B cell (primary cell): ENCODE measurements at regions of chr1 and their contacts with region 1.

Region 1: GRCh38 chr1:228486596-228487335 is 416 bp upstream of the RNF187 start:
- DNase-seq: peak; percentile 97
- ATAC-seq: peak; percentile 70
- H3K4me3 ChIP-seq: peak overlapping the region; percentile 74 to 98 (median 93)
- H3K4me3 Mint-ChIP-seq: peak overlapping the region; percentile 97
- H3K27ac ChIP-seq: peak overlapping the region; percentile 100
- H3K27ac Mint-ChIP-seq: peak overlapping the region; percentile 100
- H3K4me1 ChIP-seq: peaks cover 14 to 25% of the 10 kb centered on the region in 2 donors
- H3K4me1 Mint-ChIP-seq: peaks cover 36% of the 10 kb centered on the region
- H3K27me3 ChIP-seq: no peaks in the 10 kb centered on the region
- H3K27me3 Mint-ChIP-seq: no peaks in the 10 kb centered on the region
- CTCF ChIP-seq: no peak

Region 2: DNA sequence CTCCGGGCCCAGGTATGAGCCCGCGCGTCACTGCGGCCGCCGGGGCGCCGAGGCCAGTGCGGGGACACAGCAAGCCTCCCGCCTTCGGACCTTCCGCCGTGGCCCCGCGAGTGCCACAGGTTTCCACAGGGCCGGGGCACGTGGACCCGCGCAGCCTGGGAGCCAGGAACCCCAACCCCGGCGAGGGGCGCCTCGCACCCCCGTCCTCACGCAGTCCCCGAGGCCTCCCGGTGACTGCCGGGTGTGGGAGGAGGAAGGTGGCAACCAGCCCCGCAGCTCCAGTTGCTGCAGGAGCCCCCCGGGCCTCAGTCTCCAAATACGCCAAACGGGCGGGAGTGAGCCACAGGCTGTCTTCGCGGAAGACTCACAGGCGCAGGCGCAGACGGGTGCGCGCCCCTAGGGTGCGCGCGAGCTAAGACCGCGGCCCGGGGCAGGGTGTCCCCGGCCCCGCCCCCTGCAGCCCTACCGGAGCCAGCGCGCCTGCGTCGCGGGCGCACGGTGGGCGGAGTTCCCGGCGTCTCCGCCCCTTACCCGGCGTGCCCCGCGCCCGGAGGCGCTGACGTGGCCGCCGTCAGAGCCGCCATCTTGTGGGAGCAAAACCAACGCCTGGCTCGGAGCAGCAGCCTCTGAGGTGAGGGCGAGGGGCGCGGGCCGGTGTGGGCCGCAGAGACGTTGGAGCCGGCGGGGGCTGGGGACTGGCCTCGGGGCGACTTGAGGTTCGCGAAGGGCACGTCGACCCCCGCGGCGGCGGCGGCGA is 404.5 kb before region 1 on chr1 and contains the start of gene ARF1:
- CTCF ChIA-PET with region 1: no interaction called
- POLR2A ChIA-PET with region 1: interaction called, 4 read pairs
- intact Hi-C with region 1: loop called (anchors 1 kb)
- DNase-seq: peak; percentile 96
- ATAC-seq: peak; percentile 92
- H3K4me3 ChIP-seq: peak within 1 kb of the TSS; percentile 78 to 97 (median 91)
- H3K4me3 Mint-ChIP-seq: peak within 1 kb of the TSS; percentile 94
- H3K27ac ChIP-seq: peak within 1 kb of the TSS; percentile 78 to 96
- H3K27ac Mint-ChIP-seq: peak within 1 kb of the TSS; percentile 93
- H3K4me1 ChIP-seq: peaks cover 44 to 50% of the 10 kb centered on the region in 2 donors
- H3K4me1 Mint-ChIP-seq: peaks cover 46% of the 10 kb centered on the region
- H3K27me3 ChIP-seq: no peaks in the 10 kb centered on the region
- H3K27me3 Mint-ChIP-seq: no peaks in the 10 kb centered on the region
- CTCF ChIP-seq: no peak
- total RNA-seq, gene ARF1: 193 and 195 TPM in 2 replicates

Region 3: GRCh38 chr1:228165372-228166169 is 321.2 kb before region 1 on chr1 and contains the start of gene IBA57:
- CTCF ChIA-PET with region 1: interaction called, 3 read pairs
- POLR2A ChIA-PET with region 1: interaction called, 4 read pairs
- intact Hi-C with region 1: loop called (anchors 1 kb)
- DNase-seq: peak; percentile 100
- ATAC-seq: peak; percentile 84
- H3K4me3 ChIP-seq: peak within 1 kb of the TSS; percentile 64 to 88 (median 74)
- H3K4me3 Mint-ChIP-seq: peak within 1 kb of the TSS; percentile 93
- H3K27ac ChIP-seq: peak within 1 kb of the TSS; percentile 95 to 98
- H3K27ac Mint-ChIP-seq: peak within 1 kb of the TSS; percentile 99
- H3K4me1 ChIP-seq: peaks cover 14 to 26% of the 10 kb centered on the region in 2 donors
- H3K4me1 Mint-ChIP-seq: peaks cover 28% of the 10 kb centered on the region
- H3K27me3 ChIP-seq: peaks cover 0 to 5% (median 0%) of the 10 kb centered on the region in 4 experiments
- H3K27me3 Mint-ChIP-seq: no peaks in the 10 kb centered on the region
- CTCF ChIP-seq: peak; percentile 73
- total RNA-seq, gene IBA57: 12.8 and 15.3 TPM in 2 replicates

Region 4: DNA sequence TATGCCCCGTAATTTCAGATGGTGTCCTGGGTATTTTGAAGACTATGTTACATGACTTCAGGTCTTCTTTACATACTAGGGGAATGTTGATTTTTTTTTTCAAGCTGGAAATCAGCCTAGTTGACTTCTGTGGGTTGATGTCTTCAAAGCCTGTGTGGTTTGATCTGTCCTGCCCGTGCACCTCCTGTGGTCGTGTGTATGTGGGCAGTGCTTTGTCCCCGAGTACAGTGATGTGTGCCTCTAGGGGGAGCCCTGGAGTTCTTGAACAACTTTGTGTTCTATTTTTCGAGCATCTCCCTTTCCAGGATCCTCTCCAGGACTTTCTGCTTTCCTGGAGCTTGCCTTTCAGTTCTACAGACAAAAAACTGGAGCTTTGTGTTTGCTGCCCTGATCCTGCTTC is 250.0 kb before region 1 on chr1:
- CTCF ChIA-PET with region 1: no interaction called
- POLR2A ChIA-PET with region 1: no interaction called
- intact Hi-C with region 1: no loop called
- DNase-seq: no peak
- ATAC-seq: no peak
- H3K4me3 ChIP-seq: no peak overlapping the region
- H3K4me3 Mint-ChIP-seq: no peak overlapping the region
- H3K27ac ChIP-seq: no peak overlapping the region
- H3K27ac Mint-ChIP-seq: no peak overlapping the region
- H3K4me1 ChIP-seq: no peaks in the 10 kb centered on the region
- H3K4me1 Mint-ChIP-seq: no peaks in the 10 kb centered on the region
- H3K27me3 ChIP-seq: no peaks in the 10 kb centered on the region
- H3K27me3 Mint-ChIP-seq: no peaks in the 10 kb centered on the region
- CTCF ChIP-seq: peak; percentile 23

Region 5: DNA sequence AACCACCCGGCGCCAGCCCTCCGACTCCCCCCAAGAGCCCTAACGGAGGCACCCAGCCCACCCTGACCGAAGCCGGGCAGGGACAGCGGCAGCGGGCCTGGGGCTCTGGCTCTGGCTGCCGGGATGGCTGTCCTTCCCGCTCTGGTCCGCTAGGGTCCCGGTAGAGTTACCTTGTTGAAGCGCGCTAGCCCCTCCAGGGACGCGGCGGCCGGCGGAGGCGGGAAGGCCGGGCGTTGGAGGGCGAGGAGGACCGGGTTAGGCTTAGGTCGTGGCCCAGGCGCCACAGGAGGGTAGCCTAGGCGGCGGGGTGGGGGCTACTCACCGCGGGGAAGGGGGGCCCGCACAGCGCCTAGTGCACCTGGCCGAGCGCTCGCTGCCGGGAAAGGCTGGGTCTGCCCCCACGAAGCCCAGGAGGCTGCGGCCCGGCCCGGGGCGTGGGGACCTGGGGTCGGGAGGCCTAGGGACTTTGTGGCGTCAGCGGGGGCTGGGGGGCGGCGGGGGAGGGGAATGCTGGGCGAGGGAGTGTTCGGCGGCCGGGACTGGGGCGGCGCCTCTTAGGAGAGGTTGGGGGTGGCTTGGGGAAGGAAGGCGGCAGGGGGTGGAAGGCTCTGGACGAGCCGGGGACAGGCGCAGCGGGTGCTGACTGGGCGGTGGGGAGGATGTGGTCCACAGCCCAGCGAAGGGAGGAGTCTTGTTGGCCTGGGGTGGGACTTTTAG is 70.4 kb before region 1 on chr1 and contains the start of gene TRIM17:
- CTCF ChIA-PET with region 1: no interaction called
- POLR2A ChIA-PET with region 1: no interaction called
- intact Hi-C with region 1: no loop called
- DNase-seq: peak; percentile 50
- ATAC-seq: peak; percentile 63
- H3K4me3 ChIP-seq: peak within 1 kb of the TSS in 3 of 5 experiments; percentile 1 to 36 (median 28)
- H3K4me3 Mint-ChIP-seq: peak within 1 kb of the TSS; percentile 78
- H3K27ac ChIP-seq: no peak within 1 kb of the TSS
- H3K27ac Mint-ChIP-seq: no peak within 1 kb of the TSS
- H3K4me1 ChIP-seq: peaks cover 17 to 20% of the 10 kb centered on the region in 2 donors
- H3K4me1 Mint-ChIP-seq: peaks cover 16% of the 10 kb centered on the region
- H3K27me3 ChIP-seq: peaks cover 0 to 42% (median 25%) of the 10 kb centered on the region in 4 experiments
- H3K27me3 Mint-ChIP-seq: peaks cover 50% of the 10 kb centered on the region
- CTCF ChIP-seq: peak; percentile 41
- total RNA-seq, gene TRIM17: 0.17 TPM in 1 of 2 replicates, not detected in the other

Region 6: GRCh38 chr1:228457396-228458176 is 29.2 kb before region 1 on chr1:
- CTCF ChIA-PET with region 1: interaction called, 8 read pairs
- POLR2A ChIA-PET with region 1: interaction called, 14 read pairs
- intact Hi-C with region 1: loop called (anchors 1 kb)
- DNase-seq: peak; percentile 90
- ATAC-seq: peak; percentile 88
- H3K4me3 ChIP-seq: peak overlapping the region in 4 of 5 experiments; percentile 44 to 58 (median 48)
- H3K4me3 Mint-ChIP-seq: peak overlapping the region; percentile 92
- H3K27ac ChIP-seq: peak overlapping the region; percentile 72 to 79
- H3K27ac Mint-ChIP-seq: peak overlapping the region; percentile 98
- H3K4me1 ChIP-seq: peaks cover 24 to 30% of the 10 kb centered on the region in 2 donors
- H3K4me1 Mint-ChIP-seq: peaks cover 27% of the 10 kb centered on the region
- H3K27me3 ChIP-seq: peaks cover 0 to 44% (median 17%) of the 10 kb centered on the region in 4 experiments
- H3K27me3 Mint-ChIP-seq: peaks cover 37% of the 10 kb centered on the region
- CTCF ChIP-seq: no peak